ENCODE measurements at regions of chr5 and their contacts with region 1.

Region 1: GRCh38 chr5:74919487-74919886 is 53.3 kb upstream of the FAM169A start:
- DNase-seq: no peak
- H3K4me3 ChIP-seq: no peak overlapping the region
- CTCF ChIP-seq: peak; percentile 42

Region 2: GRCh38 chr5:74766849-74767578 is 152.5 kb before region 1 on chr5 and contains the starts of genes GFM2 and NSA2:
- CTCF ChIA-PET with region 1: interaction called, 13 read pairs
- POLR2A ChIA-PET with region 1: no interaction called
- DNase-seq: peak; percentile 56
- H3K4me3 ChIP-seq: peak within 1 kb of the TSS; percentile 97
- CTCF ChIP-seq: no peak

Region 3: DNA sequence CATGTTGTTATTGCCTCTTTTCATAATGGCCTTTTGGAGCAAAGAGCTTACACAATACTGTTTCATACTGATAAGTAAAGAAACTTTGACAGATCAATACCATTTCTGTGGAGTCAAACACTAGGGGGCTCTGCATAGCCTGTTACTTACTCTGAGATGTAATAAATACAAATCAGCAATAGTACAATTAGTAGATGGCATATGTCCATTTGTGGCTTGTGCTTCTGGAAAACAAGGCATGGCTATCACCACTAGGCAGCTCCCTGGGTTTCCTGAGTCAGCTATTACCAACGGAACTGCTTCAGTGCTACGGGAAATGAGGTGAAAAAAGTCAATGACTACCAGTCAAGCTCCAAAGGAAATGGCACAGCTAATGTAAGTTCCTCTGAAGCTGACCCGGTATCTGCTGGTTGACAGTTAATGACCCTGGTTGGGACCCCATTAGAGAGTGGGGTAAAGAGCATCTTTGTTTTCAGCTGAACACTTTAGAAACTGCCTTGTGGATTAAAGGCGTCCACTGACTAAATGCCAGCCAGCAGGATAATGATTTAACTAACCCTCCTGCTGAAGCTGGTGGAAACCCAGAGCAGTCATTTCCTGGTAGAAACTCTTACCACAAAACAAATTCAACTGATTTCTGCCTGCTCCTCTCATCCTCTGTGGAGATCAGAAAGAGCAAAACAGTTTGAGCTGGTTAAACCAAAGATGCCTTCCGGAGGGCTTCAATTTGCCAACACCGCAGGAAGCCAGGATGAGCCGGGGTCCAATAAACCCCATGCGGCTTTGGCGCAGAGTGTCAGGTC is 15.7 kb after region 1 on chr5:
- CTCF ChIA-PET with region 1: interaction called, 11 read pairs
- POLR2A ChIA-PET with region 1: no interaction called
- DNase-seq: no peak
- H3K4me3 ChIP-seq: no peak overlapping the region
- CTCF ChIP-seq: peak; percentile 15